HCT116 (cell line): ENCODE measurements at regions of chr16 and their contacts with region 1.

Region 1: DNA sequence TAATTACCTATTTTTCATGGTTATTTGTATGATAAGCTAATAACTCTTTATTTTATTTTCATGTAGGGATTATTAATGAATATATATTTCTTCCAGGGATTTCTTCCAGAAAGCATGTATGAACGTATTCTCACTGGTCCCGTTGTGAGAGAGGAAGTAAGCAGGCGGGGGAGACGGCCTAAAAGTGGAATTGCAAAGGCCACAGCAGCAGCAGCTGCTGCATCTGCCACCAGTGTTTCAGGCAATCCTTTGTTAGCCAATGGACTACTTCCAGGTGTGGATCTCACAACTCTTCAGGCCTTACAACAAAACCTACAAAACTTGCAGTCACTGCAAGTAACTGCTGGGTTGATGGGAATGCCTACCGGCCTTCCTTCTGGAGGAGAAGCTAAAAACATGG is 110.3 kb upstream of the RBL2 start:
- DNase-seq: no peak
- ATAC-seq: no peak
- H3K4me3 ChIP-seq: no peak overlapping the region
- H3K27ac ChIP-seq: no peak overlapping the region
- H3K4me1 ChIP-seq: no peaks in the 10 kb centered on the region
- H3K27me3 ChIP-seq: no peaks in the 10 kb centered on the region
- CTCF ChIP-seq: no peak
- POLR2A ChIP-seq: no peak
- RAD21 ChIP-seq: no peak

Region 2: GRCh38 chr16:52050418-52050817 is 1273.5 kb before region 1 on chr16:
- CTCF ChIA-PET with region 1: no interaction called
- POLR2A ChIA-PET with region 1: no interaction called
- RAD21 ChIA-PET with region 1: no interaction called
- intact Hi-C with region 1: no loop called
- DNase-seq: no peak
- ATAC-seq: no peak
- H3K4me3 ChIP-seq: no peak overlapping the region
- H3K27ac ChIP-seq: no peak overlapping the region
- H3K4me1 ChIP-seq: no peaks in the 10 kb centered on the region
- H3K27me3 ChIP-seq: no peaks in the 10 kb centered on the region
- CTCF ChIP-seq: no peak
- POLR2A ChIP-seq: no peak
- RAD21 ChIP-seq: no peak

Region 3: GRCh38 chr16:53091466-53092211 is 232.3 kb before region 1 on chr16:
- CTCF ChIA-PET with region 1: no interaction called
- POLR2A ChIA-PET with region 1: no interaction called
- RAD21 ChIA-PET with region 1: no interaction called
- intact Hi-C with region 1: no loop called
- DNase-seq: no peak
- ATAC-seq: no peak
- H3K4me3 ChIP-seq: no peak overlapping the region
- H3K27ac ChIP-seq: no peak overlapping the region
- H3K4me1 ChIP-seq: peaks cover 17 to 32% of the 10 kb centered on the region in 2 experiments
- H3K27me3 ChIP-seq: no peaks in the 10 kb centered on the region
- CTCF ChIP-seq: no peak
- POLR2A ChIP-seq: no peak
- RAD21 ChIP-seq: no peak

Region 4: GRCh38 chr16:53341792-53342191 is 17.9 kb after region 1 on chr16:
- CTCF ChIA-PET with region 1: no interaction called
- POLR2A ChIA-PET with region 1: no interaction called
- RAD21 ChIA-PET with region 1: no interaction called
- intact Hi-C with region 1: loop called (anchors 2 kb)
- DNase-seq: no peak
- ATAC-seq: no peak
- H3K4me3 ChIP-seq: no peak overlapping the region
- H3K27ac ChIP-seq: no peak overlapping the region
- H3K4me1 ChIP-seq: no peaks in the 10 kb centered on the region
- H3K27me3 ChIP-seq: no peaks in the 10 kb centered on the region
- CTCF ChIP-seq: no peak
- POLR2A ChIP-seq: no peak
- RAD21 ChIP-seq: no peak